Prostate gland (tissue), 2 donors: ENCODE measurements at regions of chr16 and their contacts with region 1.

Region 1: GRCh38 chr16:71484006-71484893 is 4.9 kb downstream of the ZNF19 start:
- DNase-seq: peak; percentile 86
- H3K4me3 ChIP-seq: peak overlapping the region; percentile 83 to 87
- H3K27ac ChIP-seq: peak overlapping the region; percentile 95 to 96
- H3K4me1 ChIP-seq: no peaks in the 10 kb centered on the region
- H3K27me3 ChIP-seq: no peaks in the 10 kb centered on the region
- CTCF ChIP-seq: peak in 1 of 4 experiments; percentile 20
- POLR2A ChIP-seq: peak; percentile 62

Region 2: DNA sequence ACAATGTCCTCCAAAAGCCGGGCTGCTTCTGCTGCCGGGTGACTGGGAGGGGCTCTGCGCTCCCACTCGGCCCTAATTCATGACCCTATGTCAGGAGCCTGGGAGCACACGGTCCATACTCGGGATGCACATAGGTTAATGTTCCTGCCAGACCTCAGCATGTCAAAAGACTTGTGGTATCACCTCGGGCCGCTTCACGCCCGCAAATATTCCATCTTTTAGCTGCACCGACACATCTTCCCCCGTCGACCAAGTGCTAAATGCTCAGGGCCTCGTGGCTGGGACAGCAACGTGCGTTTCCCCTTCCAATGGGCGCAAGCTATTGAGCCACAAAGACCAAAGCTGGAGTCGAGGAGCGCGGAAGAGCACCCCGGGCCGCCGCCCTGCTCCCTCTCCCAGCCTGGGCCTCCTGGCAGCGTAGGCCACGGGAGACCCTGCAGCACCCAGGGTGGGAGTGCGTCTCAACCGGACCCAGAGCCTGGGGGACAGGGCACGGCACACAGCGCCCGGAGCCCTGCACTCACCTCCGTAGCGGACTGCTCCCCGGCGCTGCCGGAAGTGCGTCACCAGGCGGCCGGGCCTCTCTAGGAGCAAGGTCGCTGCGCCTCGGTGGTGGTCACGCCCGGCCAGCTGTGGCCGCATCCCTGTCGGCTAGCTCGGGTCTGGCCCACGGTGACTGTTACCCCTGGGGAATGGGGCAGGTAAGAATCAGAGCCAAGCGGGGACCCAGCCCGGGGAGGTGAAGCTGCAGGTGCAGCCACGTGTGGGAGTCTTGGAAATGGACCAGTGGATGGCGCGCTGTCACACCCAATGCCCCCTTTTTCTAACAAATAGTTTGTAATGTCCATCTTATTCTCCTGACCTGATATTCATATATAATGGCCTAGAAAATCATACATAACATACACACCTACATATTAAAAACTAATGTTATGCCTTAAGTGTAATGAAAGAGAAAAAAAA is 22.3 kb before region 1 on chr16 and contains the start of gene ZNF23:
- intact Hi-C with region 1: loop called (anchors 1 kb)
- DNase-seq: peak; percentile 73
- H3K4me3 ChIP-seq: peak within 1 kb of the TSS; percentile 87 to 90
- H3K27ac ChIP-seq: peak within 1 kb of the TSS; percentile 75
- H3K4me1 ChIP-seq: no peaks in the 10 kb centered on the region
- H3K27me3 ChIP-seq: no peaks in the 10 kb centered on the region
- CTCF ChIP-seq: peak in 3 of 4 experiments; percentile 17 to 36 (median 21)
- POLR2A ChIP-seq: peak; percentile 43
- total RNA-seq, gene ZNF23: 6.1 to 6.8 TPM